ENCODE measurements at regions of chr1 and their contacts with region 1.

Region 1: GRCh38 chr1:160951443-160952128 is 3.0 kb downstream of the ITLN2 start:
- DNase-seq: peak; percentile 68
- H3K4me3 ChIP-seq: no peak overlapping the region
- H3K27ac ChIP-seq: peak overlapping the region; percentile 62 to 68
- H3K4me1 ChIP-seq: peaks cover 12% of the 10 kb centered on the region
- H3K27me3 ChIP-seq: no peaks in the 10 kb centered on the region
- CTCF ChIP-seq: peak; percentile 38 to 82 (median 71)
- POLR2A ChIP-seq: no peak

Region 2: DNA sequence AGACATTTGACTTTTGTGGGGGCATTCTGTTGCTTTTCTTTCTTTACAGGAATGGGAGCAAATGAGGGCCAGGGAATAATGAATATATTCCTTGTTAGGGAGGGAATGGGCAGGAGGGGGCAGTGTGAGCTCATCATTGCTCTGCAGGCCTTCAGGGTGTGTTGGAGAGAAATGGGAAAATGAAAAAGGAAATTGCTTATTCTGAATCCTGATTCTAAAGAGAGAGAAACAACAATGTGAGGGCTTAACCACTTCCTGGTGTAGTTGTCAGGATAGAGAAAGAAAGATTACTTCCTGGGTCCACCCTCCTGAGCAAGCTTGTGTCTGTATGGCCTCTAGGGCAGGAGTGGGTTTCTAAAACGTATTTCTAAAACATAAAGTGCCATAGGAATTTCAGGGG is 522.9 kb before region 1 on chr1:
- intact Hi-C with region 1: loop called (anchors 10 kb)
- DNase-seq: no peak
- H3K4me3 ChIP-seq: no peak overlapping the region
- H3K27ac ChIP-seq: no peak overlapping the region
- H3K4me1 ChIP-seq: peaks cover 2% of the 10 kb centered on the region
- H3K27me3 ChIP-seq: no peaks in the 10 kb centered on the region
- CTCF ChIP-seq: peak in 3 of 4 experiments; percentile 46 to 58 (median 56)
- POLR2A ChIP-seq: no peak

Region 3: DNA sequence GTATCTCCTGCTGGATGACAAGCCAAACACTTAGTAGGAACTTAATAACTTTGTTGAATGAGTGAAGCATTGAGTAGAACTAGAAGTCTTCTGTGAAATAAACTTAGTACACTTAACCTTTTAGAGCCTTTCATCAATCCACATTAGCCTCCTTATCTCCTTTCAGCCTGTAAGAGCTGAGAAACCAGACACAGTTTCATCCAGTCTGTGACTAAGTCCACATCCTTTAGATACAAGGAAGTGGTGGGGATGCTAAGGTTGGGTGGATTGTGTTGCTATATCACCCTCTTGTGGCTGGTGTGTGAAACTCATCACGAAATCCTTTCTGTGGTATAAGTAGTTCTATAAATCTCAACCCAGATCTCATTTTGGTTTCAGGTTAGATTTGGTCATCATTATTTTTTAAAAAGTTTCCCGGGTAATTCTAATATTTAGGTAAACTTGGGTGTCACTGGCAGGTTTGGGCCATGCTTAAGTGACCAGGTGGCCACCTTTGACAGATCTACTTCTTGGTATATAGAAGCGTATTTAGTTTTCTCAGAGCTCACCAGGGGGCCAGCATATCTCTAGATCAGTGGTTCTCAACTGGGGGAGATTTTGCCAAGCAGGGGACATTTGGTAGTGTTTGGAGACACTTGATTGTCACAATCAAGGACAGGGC is 344.4 kb before region 1 on chr1:
- intact Hi-C with region 1: no loop called
- DNase-seq: peak; percentile 37
- H3K4me3 ChIP-seq: no peak overlapping the region
- H3K27ac ChIP-seq: no peak overlapping the region
- H3K4me1 ChIP-seq: no peaks in the 10 kb centered on the region
- H3K27me3 ChIP-seq: no peaks in the 10 kb centered on the region
- CTCF ChIP-seq: peak in 3 of 4 experiments; percentile 62 to 79 (median 69)
- POLR2A ChIP-seq: no peak

Region 4: GRCh38 chr1:160837558-160838205 is 113.9 kb before region 1 on chr1:
- intact Hi-C with region 1: loop called (anchors 5 kb)
- DNase-seq: no peak
- H3K4me3 ChIP-seq: no peak overlapping the region
- H3K27ac ChIP-seq: no peak overlapping the region
- H3K4me1 ChIP-seq: no peaks in the 10 kb centered on the region
- H3K27me3 ChIP-seq: no peaks in the 10 kb centered on the region
- CTCF ChIP-seq: no peak
- POLR2A ChIP-seq: no peak